ENCODE measurements at regions of chr20 and their contacts with region 1.

Region 1: DNA sequence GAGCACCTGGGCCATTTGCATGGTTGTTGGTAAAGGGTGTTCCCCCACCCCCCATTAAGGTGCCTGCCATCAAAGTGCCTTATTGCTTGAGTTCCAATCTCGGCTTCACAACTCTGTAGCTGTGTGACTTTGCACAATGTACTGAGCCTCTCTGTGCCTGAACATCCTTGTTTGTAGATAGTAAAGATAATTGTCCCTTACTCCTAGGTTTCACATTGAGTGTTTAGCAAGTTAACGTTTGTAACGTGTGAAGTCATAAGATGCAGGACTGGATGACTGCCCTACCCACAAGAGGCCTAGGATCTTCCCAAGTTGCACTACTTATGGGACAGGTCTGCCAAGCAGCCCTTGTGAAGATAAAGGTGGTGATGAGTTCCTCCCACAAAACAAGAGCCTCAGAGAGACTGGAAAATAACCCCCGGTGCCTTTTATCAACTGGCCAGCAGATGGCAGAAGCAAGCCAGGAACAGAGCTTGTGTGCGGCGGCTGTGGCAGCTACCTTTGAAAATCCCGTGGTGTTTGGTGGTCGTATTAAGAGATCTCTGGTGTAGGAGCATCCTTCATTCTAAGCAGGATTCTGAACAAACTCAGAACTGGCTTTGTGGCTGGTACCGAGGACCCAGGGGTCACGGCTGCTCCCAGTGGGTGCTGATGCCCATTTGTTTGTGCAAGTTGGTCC is 99.0 kb downstream of the CDH26 start:
- DNase-seq: peak in 4 of 6 donors; percentile 17 to 64 (median 47)
- ATAC-seq: peak in 3 of 4 donors; percentile 77 to 79 (median 78)
- H3K4me3 ChIP-seq: no peak overlapping the region
- H3K27ac ChIP-seq: no peak overlapping the region
- H3K4me1 ChIP-seq: no peaks in the 10 kb centered on the region
- H3K27me3 ChIP-seq: peaks cover 0 to 16% (median 0%) of the 10 kb centered on the region in 4 donors
- CTCF ChIP-seq: peak; percentile 36 to 79 (median 76)

Region 2: GRCh38 chr20:61896058-61896961 is 1839.0 kb after region 1 on chr20:
- intact Hi-C with region 1: loop called in 1 of 3 experiments (anchors 10 kb)
- DNase-seq: peak in 5 of 6 donors; percentile 18 to 83 (median 50)
- ATAC-seq: peak; percentile 69 to 92 (median 90)
- H3K4me3 ChIP-seq: no peak overlapping the region
- H3K27ac ChIP-seq: no peak overlapping the region
- H3K4me1 ChIP-seq: no peaks in the 10 kb centered on the region
- H3K27me3 ChIP-seq: no peaks in the 10 kb centered on the region
- CTCF ChIP-seq: peak; percentile 39 to 62 (median 59)